Calu3 (cell line): ENCODE measurements at regions of chr20 and their contacts with region 1.

Region 1: DNA sequence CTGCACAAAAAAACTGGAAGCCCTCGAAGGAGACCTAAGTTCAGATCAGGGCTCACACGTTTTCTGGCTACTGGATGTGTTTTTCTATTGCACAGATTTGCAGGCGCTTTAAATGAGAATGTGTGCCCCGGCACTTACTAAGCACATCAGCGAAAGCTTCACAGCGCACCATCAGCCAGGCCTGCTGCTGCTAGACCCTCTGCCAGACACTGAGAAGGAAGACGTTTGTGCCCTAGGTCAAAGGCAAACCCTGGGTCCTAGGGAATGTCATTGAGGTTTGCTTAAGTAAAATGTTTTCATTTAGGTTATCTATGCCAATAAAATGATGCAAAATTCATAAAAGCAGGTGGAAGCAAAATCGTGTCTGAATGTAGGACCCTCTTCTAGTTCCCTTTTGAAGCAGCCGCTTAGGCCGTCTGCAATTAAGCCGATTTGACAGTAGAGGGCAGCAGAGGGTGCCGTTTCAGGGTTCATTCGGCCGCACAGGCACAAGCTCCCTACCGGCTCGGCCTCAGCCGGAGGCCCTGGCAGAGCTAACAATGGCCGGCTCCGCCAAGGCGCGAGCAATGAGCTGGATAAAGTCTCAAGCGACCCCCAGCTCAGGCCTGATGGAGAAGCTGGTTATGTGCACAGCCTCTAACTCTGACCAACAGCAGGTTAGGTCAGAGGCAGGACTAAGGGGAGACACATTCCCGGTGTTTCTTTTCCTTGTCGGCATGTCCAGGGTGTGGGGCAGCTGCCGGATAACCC is 107.2 kb upstream of the FOXA2 start:
- DNase-seq: peak; percentile 36
- H3K4me3 Mint-ChIP-seq: no peak overlapping the region
- H3K27ac Mint-ChIP-seq: no peak overlapping the region
- H3K4me1 Mint-ChIP-seq: no peaks in the 10 kb centered on the region
- H3K27me3 Mint-ChIP-seq: no peaks in the 10 kb centered on the region
- CTCF ChIP-seq: peak; percentile 30

Region 2: DNA sequence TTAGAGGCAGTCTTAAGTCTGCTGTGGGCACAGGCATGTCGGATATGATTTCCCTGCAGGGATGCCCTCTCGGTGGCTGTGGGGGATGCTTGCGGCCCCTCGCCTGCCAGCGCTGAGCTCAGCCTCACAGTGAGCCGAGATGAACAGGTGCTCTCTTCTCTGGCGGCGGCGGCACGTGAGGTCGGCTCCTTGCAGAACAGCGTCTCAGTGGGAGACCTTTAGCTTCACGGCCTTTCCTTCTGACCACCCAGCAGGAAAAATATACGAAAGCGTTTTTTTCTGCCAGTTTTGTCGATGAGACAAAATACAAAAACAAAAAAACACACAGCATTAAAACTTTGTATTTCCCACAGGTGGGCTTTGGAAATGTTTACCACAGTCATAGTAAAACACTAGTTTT is 130.7 kb before region 1 on chr20:
- CTCF ChIA-PET with region 1: no interaction called
- intact Hi-C with region 1: no loop called
- DNase-seq: no peak
- H3K4me3 Mint-ChIP-seq: no peak overlapping the region
- H3K27ac Mint-ChIP-seq: no peak overlapping the region
- H3K4me1 Mint-ChIP-seq: no peaks in the 10 kb centered on the region
- H3K27me3 Mint-ChIP-seq: no peaks in the 10 kb centered on the region
- CTCF ChIP-seq: no peak

Region 3: GRCh38 chr20:22974353-22974752 is 282.8 kb after region 1 on chr20:
- CTCF ChIA-PET with region 1: interaction called, 5 read pairs
- intact Hi-C with region 1: loop called (anchors 2 kb)
- DNase-seq: peak; percentile 1
- H3K4me3 Mint-ChIP-seq: no peak overlapping the region
- H3K27ac Mint-ChIP-seq: no peak overlapping the region
- H3K4me1 Mint-ChIP-seq: no peaks in the 10 kb centered on the region
- H3K27me3 Mint-ChIP-seq: peaks cover 30% of the 10 kb centered on the region
- CTCF ChIP-seq: peak; percentile 23

Region 4: DNA sequence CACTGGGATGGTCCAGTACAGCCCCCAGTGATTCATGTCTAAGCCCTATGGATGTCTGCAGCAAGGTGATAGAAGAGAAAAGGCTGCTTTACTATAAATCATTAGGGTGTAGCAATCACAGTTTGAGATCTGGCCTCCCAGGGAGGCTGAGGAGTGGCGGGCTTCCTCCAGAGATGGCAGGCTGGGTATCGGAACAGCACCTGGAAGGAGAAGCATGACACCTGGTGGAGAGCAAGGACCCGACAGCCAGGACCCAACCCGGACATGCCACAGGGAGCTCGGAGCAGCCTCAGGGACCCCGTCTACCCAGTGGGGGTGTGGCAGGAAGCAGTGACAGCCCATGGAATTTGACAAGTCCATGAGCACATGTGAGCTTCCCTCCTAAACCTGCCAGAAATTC is 509.4 kb after region 1 on chr20:
- CTCF ChIA-PET with region 1: interaction called, 5 read pairs
- intact Hi-C with region 1: loop called (anchors 5 kb)
- DNase-seq: peak; percentile 47
- H3K4me3 Mint-ChIP-seq: no peak overlapping the region
- H3K27ac Mint-ChIP-seq: no peak overlapping the region
- H3K4me1 Mint-ChIP-seq: no peaks in the 10 kb centered on the region
- H3K27me3 Mint-ChIP-seq: peaks cover 37% of the 10 kb centered on the region
- CTCF ChIP-seq: no peak

Region 5: DNA sequence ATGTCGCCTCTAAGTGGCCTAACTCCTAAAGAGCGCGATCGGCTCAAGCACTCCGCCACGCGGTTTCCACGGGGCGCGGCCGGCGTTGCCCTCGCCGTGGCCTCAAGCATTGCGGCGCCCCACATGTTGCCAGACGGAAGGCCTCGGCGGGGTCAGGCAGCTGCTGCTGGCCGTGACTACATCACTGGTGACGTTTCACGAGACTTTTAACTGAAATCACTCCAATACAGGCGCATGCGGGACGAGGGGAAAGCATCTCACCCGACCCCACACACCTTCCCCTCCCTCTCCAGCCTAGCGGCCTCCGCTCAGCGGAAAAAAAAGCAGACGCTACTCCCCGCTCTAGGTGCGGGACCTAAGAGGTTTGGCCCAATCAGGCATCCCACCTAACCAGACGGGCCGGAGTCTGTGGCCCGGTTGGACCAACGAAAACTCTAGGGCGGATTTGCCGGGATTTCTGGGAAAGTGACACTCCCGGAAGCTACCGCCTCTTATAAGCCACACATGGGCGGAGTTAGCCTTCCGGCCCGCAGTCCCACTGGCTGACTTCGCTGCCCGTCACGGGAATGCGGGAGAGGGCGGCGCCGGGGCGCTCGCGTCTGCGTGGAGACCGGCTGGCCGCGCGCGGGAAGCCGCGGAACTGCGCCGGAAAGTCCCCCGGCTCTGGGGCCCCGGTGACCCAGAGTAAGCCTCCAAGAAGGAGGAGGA is 658.8 kb after region 1 on chr20 and contains the start of gene NXT1:
- CTCF ChIA-PET with region 1: no interaction called
- intact Hi-C with region 1: loop called (anchors 10 kb)
- DNase-seq: peak; percentile 83
- H3K4me3 Mint-ChIP-seq: peak within 1 kb of the TSS; percentile 86
- H3K27ac Mint-ChIP-seq: peak within 1 kb of the TSS; percentile 96
- H3K4me1 Mint-ChIP-seq: no peaks in the 10 kb centered on the region
- H3K27me3 Mint-ChIP-seq: no peaks in the 10 kb centered on the region
- CTCF ChIP-seq: no peak
- total RNA-seq, gene NXT1: 7.2 and 7.9 TPM in 2 replicates